Dendritic cell treated with granulocyte-macrophage colony-stimulating factor and Interleukin-4, amounts not matched to agents 40 ng/mL and 50 ng/mL, for 4 days (primary cell): ENCODE measurements at regions of chr7 and their contacts with region 1.

Region 1: GRCh38 chr7:152463709-152464311 is 28.0 kb upstream of the KMT2C start:
- H3K4me3 Mint-ChIP-seq: peak overlapping the region; percentile 98
- H3K27ac Mint-ChIP-seq: peak overlapping the region; percentile 96
- H3K4me1 Mint-ChIP-seq: peaks cover 33% of the 10 kb centered on the region
- H3K27me3 Mint-ChIP-seq: no peaks in the 10 kb centered on the region

Region 2: GRCh38 chr7:152193880-152194279 is 269.9 kb before region 1 on chr7:
- intact Hi-C with region 1: no loop called
- H3K4me3 Mint-ChIP-seq: no peak overlapping the region
- H3K27ac Mint-ChIP-seq: no peak overlapping the region
- H3K4me1 Mint-ChIP-seq: no peaks in the 10 kb centered on the region
- H3K27me3 Mint-ChIP-seq: no peaks in the 10 kb centered on the region

Region 3: DNA sequence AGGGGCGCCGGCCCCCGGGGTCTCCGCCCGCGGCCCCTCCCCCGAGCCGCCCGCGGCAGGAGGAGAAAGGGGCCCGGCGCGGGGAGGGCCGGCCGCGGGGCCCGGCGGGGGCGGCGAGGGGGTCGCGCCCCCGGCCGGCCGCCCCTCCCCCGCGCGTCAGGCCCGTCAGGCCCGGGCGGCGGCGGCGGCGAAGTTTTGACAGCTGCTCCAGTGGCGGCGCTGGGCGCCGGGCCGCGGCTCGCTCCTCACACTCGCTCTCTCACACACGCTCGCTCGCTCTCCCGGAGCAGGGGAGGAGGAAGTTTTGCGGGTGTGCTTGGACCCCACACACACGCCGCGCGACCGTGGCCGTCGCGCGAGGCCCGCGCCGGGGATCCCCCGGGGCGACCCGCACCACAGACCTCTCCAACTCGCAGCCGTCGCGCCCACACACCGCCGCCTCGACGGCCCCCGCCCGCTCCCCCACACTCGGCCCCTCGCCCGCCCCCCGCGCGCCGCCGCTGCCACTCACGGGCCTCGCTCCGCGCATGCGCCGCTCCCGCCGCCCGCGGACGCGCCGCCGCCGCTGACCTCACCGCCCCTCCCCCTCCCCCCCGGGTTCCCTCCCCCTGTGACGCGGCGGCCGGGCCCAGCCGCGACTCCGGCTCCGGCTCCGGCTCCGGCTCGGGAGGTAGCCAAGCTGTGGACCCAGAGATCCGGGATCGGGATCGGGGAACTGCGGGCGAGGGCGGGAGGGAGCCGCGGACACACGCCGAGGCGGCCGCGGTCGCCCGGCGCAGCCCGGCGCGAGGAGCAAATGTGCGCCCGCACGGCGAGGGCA is 27.5 kb before region 1 on chr7:
- intact Hi-C with region 1: loop called (anchors 2 kb)
- H3K4me3 Mint-ChIP-seq: peak overlapping the region; percentile 80
- H3K27ac Mint-ChIP-seq: peak overlapping the region; percentile 89
- H3K4me1 Mint-ChIP-seq: peaks cover 36% of the 10 kb centered on the region
- H3K27me3 Mint-ChIP-seq: no peaks in the 10 kb centered on the region

Region 4: GRCh38 chr7:152512706-152513105 is 48.9 kb after region 1 on chr7:
- intact Hi-C with region 1: loop called (anchors 2 kb)
- H3K4me3 Mint-ChIP-seq: peak overlapping the region; percentile 64
- H3K27ac Mint-ChIP-seq: peak overlapping the region; percentile 67
- H3K4me1 Mint-ChIP-seq: peaks cover 21% of the 10 kb centered on the region
- H3K27me3 Mint-ChIP-seq: peaks cover 5% of the 10 kb centered on the region

Region 5: GRCh38 chr7:152675759-152676636 is 212.2 kb after region 1 on chr7 and contains the start of gene XRCC2:
- intact Hi-C with region 1: loop called (anchors 10 kb)
- H3K4me3 Mint-ChIP-seq: peak within 1 kb of the TSS; percentile 91
- H3K27ac Mint-ChIP-seq: peak within 1 kb of the TSS; percentile 78
- H3K4me1 Mint-ChIP-seq: peaks cover 14% of the 10 kb centered on the region
- H3K27me3 Mint-ChIP-seq: no peaks in the 10 kb centered on the region